ENCODE measurements at regions of chr16 and their contacts with region 1.

Region 1: GRCh38 chr16:4506450-4506849 is 30.3 kb downstream of the HMOX2 start:
- DNase-seq: peak; percentile 83
- ATAC-seq: no peak
- H3K4me3 ChIP-seq: no peak overlapping the region
- H3K4me3 Mint-ChIP-seq: peak overlapping the region; percentile 56
- H3K27ac ChIP-seq: peak overlapping the region; percentile 96
- H3K27ac Mint-ChIP-seq: peak overlapping the region; percentile 98
- H3K4me1 ChIP-seq: peaks cover 37 to 41% of the 10 kb centered on the region in 2 donors
- H3K4me1 Mint-ChIP-seq: peaks cover 37% of the 10 kb centered on the region
- H3K27me3 ChIP-seq: no peaks in the 10 kb centered on the region
- H3K27me3 Mint-ChIP-seq: no peaks in the 10 kb centered on the region
- CTCF ChIP-seq: peak; percentile 87

Region 2: DNA sequence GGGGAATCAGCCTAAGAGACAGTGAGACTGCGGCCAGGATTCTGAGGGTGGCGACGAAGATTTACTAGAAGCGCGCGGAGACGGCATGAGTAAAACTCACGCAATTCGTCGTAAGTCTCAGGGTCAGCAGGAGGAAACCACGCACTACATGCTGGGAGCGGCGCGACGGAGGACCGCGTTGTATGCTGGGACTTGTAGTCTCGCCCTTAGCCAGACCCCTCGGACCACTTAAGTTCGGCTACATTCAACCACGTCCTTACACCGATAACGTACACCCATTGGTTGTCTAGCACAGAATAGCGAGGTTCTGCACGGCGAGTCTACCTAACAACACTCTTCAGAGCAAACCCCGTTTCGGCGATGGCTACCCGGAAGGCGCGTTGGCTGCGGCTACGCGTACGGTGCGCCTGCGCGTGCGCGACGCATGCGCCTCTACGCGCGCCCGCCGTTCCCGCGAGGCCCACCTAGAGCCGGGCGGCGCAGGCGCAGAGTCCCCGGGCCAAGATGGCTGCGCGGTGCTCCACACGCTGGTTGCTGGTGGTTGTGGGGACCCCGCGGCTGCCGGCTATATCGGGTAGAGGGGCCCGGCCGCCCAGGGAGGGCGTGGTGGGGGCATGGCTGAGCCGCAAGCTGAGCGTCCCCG is 81.0 kb before region 1 on chr16 and contains the start of gene DNAJA3:
- CTCF ChIA-PET with region 1: no interaction called
- POLR2A ChIA-PET with region 1: no interaction called
- intact Hi-C with region 1: loop called (anchors 1 kb)
- DNase-seq: peak; percentile 98
- ATAC-seq: peak; percentile 92
- H3K4me3 ChIP-seq: peak within 1 kb of the TSS; percentile 80 to 99 (median 89)
- H3K4me3 Mint-ChIP-seq: peak within 1 kb of the TSS; percentile 97
- H3K27ac ChIP-seq: peak within 1 kb of the TSS; percentile 93 to 96
- H3K27ac Mint-ChIP-seq: peak within 1 kb of the TSS; percentile 100
- H3K4me1 ChIP-seq: peaks cover 14 to 20% of the 10 kb centered on the region in 2 donors
- H3K4me1 Mint-ChIP-seq: peaks cover 25% of the 10 kb centered on the region
- H3K27me3 ChIP-seq: no peaks in the 10 kb centered on the region
- H3K27me3 Mint-ChIP-seq: no peaks in the 10 kb centered on the region
- CTCF ChIP-seq: no peak
- total RNA-seq, gene DNAJA3: 59.3 and 68.1 TPM in 2 replicates

Region 3: GRCh38 chr16:4529085-4530060 is 22.9 kb after region 1 on chr16:
- CTCF ChIA-PET with region 1: interaction called, 14 read pairs
- POLR2A ChIA-PET with region 1: no interaction called
- intact Hi-C with region 1: no loop called
- DNase-seq: peak; percentile 36
- ATAC-seq: peak; percentile 48
- H3K4me3 ChIP-seq: no peak overlapping the region
- H3K4me3 Mint-ChIP-seq: peak overlapping the region; percentile 78
- H3K27ac ChIP-seq: peak overlapping the region; percentile 36 to 49
- H3K27ac Mint-ChIP-seq: peak overlapping the region; percentile 93
- H3K4me1 ChIP-seq: peaks cover 13 to 30% of the 10 kb centered on the region in 2 donors
- H3K4me1 Mint-ChIP-seq: peaks cover 27% of the 10 kb centered on the region
- H3K27me3 ChIP-seq: no peaks in the 10 kb centered on the region
- H3K27me3 Mint-ChIP-seq: no peaks in the 10 kb centered on the region
- CTCF ChIP-seq: no peak

Region 4: GRCh38 chr16:4586291-4586690 is 79.8 kb after region 1 on chr16:
- CTCF ChIA-PET with region 1: interaction called, 66 read pairs
- POLR2A ChIA-PET with region 1: no interaction called
- intact Hi-C with region 1: no loop called
- DNase-seq: no peak
- ATAC-seq: no peak
- H3K4me3 ChIP-seq: no peak overlapping the region
- H3K4me3 Mint-ChIP-seq: no peak overlapping the region
- H3K27ac ChIP-seq: no peak overlapping the region
- H3K27ac Mint-ChIP-seq: no peak overlapping the region
- H3K4me1 ChIP-seq: peaks cover 0 to 6% of the 10 kb centered on the region in 2 donors
- H3K4me1 Mint-ChIP-seq: no peaks in the 10 kb centered on the region
- H3K27me3 ChIP-seq: peaks cover 0 to 13% (median 0%) of the 10 kb centered on the region in 4 experiments
- H3K27me3 Mint-ChIP-seq: peaks cover 11% of the 10 kb centered on the region
- CTCF ChIP-seq: no peak

Region 5: DNA sequence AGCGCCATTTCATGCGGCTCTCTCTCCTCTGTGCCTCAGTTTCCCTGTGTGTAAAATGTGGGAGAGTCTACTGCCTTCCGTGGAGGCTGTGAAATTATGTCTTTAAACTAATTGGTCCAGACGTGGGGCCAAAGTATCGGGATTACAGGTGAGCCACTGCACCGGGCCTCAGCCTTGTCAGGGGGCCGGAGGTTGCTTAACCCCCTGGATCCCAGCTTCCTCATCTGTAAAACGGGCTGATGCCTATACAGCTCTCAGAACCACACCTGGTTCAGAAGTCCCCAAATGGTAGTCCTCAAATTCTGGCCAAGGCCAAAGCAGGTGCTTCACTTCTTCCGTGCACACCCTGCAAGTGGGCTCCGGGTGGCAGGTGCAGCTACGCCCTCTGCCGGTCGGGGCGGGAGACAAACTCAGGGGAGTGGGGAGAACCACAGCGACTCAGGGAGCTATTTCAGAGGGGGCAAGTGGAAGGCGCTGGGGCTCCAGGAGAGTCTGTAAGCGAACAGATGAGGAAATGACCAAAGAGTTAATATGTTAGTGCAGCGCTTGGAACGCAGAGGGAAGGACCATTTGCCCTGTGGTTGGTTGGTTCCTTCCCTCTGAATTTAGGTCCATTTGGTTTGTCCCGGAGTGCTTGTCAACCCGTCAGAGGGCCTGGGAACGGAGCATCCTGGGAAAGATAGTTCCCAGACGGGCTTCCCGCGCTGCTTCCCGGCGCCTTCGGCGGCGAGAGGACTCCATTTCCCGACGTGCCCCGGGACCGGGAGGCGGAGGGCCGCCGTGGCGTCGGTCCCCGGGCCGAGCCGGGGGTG is 117.8 kb after region 1 on chr16 and contains the start of gene MGRN1:
- CTCF ChIA-PET with region 1: interaction called, 27 read pairs
- POLR2A ChIA-PET with region 1: interaction called, 6 read pairs
- intact Hi-C with region 1: loop called (anchors 1 kb)
- DNase-seq: peak; percentile 96
- ATAC-seq: peak; percentile 91
- H3K4me3 ChIP-seq: peak within 1 kb of the TSS; percentile 67 to 90 (median 73)
- H3K4me3 Mint-ChIP-seq: peak within 1 kb of the TSS; percentile 100
- H3K27ac ChIP-seq: peak within 1 kb of the TSS; percentile 77 to 97
- H3K27ac Mint-ChIP-seq: peak within 1 kb of the TSS; percentile 98
- H3K4me1 ChIP-seq: peaks cover 18 to 27% of the 10 kb centered on the region in 2 donors
- H3K4me1 Mint-ChIP-seq: peaks cover 35% of the 10 kb centered on the region
- H3K27me3 ChIP-seq: no peaks in the 10 kb centered on the region
- H3K27me3 Mint-ChIP-seq: no peaks in the 10 kb centered on the region
- CTCF ChIP-seq: peak; percentile 86
- total RNA-seq, gene MGRN1: 89.2 and 89.8 TPM in 2 replicates